ENCODE measurements at regions of chr7 and their contacts with region 1.

Region 1: GRCh38 chr7:47635091-47636080 is 53.5 kb upstream of the TNS3 start:
- DNase-seq: peak; percentile 69
- H3K4me3 ChIP-seq: peak overlapping the region; percentile 23 to 49 (median 31)
- H3K27ac ChIP-seq: no peak overlapping the region
- H3K4me1 ChIP-seq: peaks cover 30% of the 10 kb centered on the region
- H3K27me3 ChIP-seq: no peaks in the 10 kb centered on the region
- CTCF ChIP-seq: no peak

Region 2: DNA sequence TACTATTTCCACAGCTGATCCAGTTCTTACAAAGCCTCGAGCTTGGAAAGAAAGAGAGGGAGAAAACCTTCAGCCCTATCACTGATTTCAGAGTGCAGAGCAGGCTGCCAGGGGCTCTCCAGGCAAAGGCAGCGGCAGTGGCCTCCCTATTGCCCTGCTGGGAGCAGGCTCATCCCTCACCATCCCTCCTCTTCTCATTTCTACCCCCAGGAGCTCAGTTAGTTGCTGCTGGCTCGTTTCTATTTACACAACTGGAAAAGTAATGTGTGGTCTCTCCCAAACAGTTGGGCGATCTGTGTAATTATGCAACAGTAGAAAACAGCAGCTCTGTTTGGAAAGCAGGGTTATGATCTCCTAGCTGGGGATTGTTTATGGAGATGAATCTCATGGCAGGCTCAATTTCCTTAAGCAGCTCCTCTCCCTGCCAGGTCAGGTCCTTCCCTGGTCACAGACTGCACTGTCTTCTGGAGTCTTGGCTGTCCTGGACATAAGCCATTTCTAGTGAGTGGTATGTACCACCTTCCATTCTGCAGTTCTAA is 24.8 kb before region 1 on chr7:
- CTCF ChIA-PET with region 1: interaction called, 16 read pairs
- dilution Hi-C with region 1: no loop called
- in situ Hi-C with region 1: no loop called
- intact Hi-C with region 1: no loop called
- DNase-seq: no peak
- H3K4me3 ChIP-seq: no peak overlapping the region
- H3K27ac ChIP-seq: no peak overlapping the region
- H3K4me1 ChIP-seq: no peaks in the 10 kb centered on the region
- H3K27me3 ChIP-seq: no peaks in the 10 kb centered on the region
- CTCF ChIP-seq: no peak

Region 3: GRCh38 chr7:47714669-47715607 is 79.6 kb after region 1 on chr7:
- CTCF ChIA-PET with region 1: no interaction called
- dilution Hi-C with region 1: loop called (anchors 5 kb)
- in situ Hi-C with region 1: no loop called
- intact Hi-C with region 1: no loop called
- DNase-seq: no peak
- H3K4me3 ChIP-seq: no peak overlapping the region
- H3K27ac ChIP-seq: no peak overlapping the region
- H3K4me1 ChIP-seq: no peaks in the 10 kb centered on the region
- H3K27me3 ChIP-seq: no peaks in the 10 kb centered on the region
- CTCF ChIP-seq: no peak

Region 4: GRCh38 chr7:47792521-47793121 is 157.2 kb after region 1 on chr7:
- CTCF ChIA-PET with region 1: no interaction called
- dilution Hi-C with region 1: no loop called
- in situ Hi-C with region 1: no loop called
- intact Hi-C with region 1: no loop called
- DNase-seq: no peak
- H3K4me3 ChIP-seq: no peak overlapping the region
- H3K27ac ChIP-seq: no peak overlapping the region
- H3K4me1 ChIP-seq: peaks cover 4% of the 10 kb centered on the region
- H3K27me3 ChIP-seq: no peaks in the 10 kb centered on the region
- CTCF ChIP-seq: peak; percentile 41 to 55

Measured in mammary epithelial cell (primary cell).